ENCODE measurements at regions of chr5 and their contacts with region 1.

Region 1: DNA sequence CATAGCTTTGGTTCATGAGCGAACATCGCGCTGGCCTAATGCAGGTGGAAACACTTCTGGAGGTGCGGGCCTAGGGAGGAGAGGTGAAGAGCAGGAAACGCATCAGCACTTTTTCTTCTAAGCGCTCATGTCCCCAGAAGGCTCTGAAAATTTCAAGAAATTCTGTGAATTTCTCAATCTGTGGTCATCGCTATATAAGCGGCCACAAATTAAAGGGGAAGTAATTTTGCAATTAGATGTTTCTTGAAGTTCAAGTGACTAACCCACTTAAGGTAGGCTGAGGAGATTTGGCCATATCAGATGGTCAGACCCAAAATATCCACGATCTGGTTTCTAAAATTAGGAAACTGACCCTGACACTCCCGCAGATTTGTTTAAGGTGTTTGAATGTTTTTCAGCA is 16.7 kb upstream of the HMGCR start:
- DNase-seq: peak; percentile 32
- H3K4me3 Mint-ChIP-seq: peak overlapping the region; percentile 35
- H3K27ac Mint-ChIP-seq: peak overlapping the region; percentile 76
- H3K4me1 Mint-ChIP-seq: peaks cover 11% of the 10 kb centered on the region
- H3K27me3 Mint-ChIP-seq: no peaks in the 10 kb centered on the region
- CTCF ChIP-seq: no peak

Region 2: GRCh38 chr5:75281716-75282465 is 38.5 kb before region 1 on chr5:
- CTCF ChIA-PET with region 1: no interaction called
- POLR2A ChIA-PET with region 1: interaction called, 12 read pairs
- intact Hi-C with region 1: no loop called
- DNase-seq: peak; percentile 10
- H3K4me3 Mint-ChIP-seq: no peak overlapping the region
- H3K27ac Mint-ChIP-seq: no peak overlapping the region
- H3K4me1 Mint-ChIP-seq: peaks cover 23% of the 10 kb centered on the region
- H3K27me3 Mint-ChIP-seq: no peaks in the 10 kb centered on the region
- CTCF ChIP-seq: no peak

Region 3: GRCh38 chr5:75300084-75300483 is 20.3 kb before region 1 on chr5:
- CTCF ChIA-PET with region 1: interaction called, 3 read pairs
- POLR2A ChIA-PET with region 1: interaction called, 10 read pairs
- intact Hi-C with region 1: no loop called
- DNase-seq: no peak
- H3K4me3 Mint-ChIP-seq: no peak overlapping the region
- H3K27ac Mint-ChIP-seq: no peak overlapping the region
- H3K4me1 Mint-ChIP-seq: no peaks in the 10 kb centered on the region
- H3K27me3 Mint-ChIP-seq: no peaks in the 10 kb centered on the region
- CTCF ChIP-seq: no peak

Region 4: DNA sequence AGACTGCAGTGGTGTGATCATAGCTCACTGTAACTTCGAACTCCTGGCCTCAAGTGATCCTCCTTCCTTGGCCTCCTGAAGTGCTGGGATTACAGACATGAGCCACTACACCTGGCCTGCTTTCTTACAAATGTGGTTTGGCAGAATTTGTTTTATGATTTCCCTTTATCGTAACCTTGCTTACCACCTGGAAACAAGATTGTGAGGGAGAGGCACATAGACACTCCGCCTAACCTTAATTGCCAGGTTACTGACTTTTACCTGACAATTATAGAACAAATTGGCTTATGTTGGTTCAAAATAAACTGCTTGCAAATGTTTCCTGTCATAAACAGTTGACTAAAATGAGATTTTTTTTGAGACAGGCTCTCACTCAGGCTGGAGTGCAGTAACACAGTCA is 10.1 kb before region 1 on chr5:
- CTCF ChIA-PET with region 1: interaction called, 11 read pairs
- POLR2A ChIA-PET with region 1: interaction called, 4 read pairs
- intact Hi-C with region 1: no loop called
- DNase-seq: no peak
- H3K4me3 Mint-ChIP-seq: no peak overlapping the region
- H3K27ac Mint-ChIP-seq: no peak overlapping the region
- H3K4me1 Mint-ChIP-seq: peaks cover 6% of the 10 kb centered on the region
- H3K27me3 Mint-ChIP-seq: no peaks in the 10 kb centered on the region
- CTCF ChIP-seq: no peak

Region 5: DNA sequence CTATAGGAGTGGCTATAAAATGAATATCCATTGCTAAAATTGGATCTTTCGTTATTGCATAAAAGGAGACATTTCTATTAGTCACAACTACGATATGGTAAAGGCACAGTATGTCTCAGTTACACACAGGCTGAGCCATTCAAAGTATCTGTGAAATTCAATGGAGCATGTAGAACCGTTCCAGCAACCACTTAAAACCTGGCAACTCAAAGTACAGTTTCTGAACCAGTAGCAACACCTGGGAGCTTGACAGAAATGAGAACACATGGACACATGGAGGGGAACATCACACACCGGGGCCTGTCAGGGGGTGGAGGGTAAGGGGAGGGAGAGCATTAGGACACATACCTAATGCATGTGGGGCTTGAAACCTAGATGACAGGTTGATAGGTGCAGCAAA is 381.5 kb after region 1 on chr5:
- CTCF ChIA-PET with region 1: no interaction called
- POLR2A ChIA-PET with region 1: no interaction called
- intact Hi-C with region 1: no loop called
- DNase-seq: no peak
- H3K4me3 Mint-ChIP-seq: no peak overlapping the region
- H3K27ac Mint-ChIP-seq: no peak overlapping the region
- H3K4me1 Mint-ChIP-seq: no peaks in the 10 kb centered on the region
- H3K27me3 Mint-ChIP-seq: no peaks in the 10 kb centered on the region
- CTCF ChIP-seq: no peak